ENCODE measurements at regions of chr19 and their contacts with region 1.

Region 1: DNA sequence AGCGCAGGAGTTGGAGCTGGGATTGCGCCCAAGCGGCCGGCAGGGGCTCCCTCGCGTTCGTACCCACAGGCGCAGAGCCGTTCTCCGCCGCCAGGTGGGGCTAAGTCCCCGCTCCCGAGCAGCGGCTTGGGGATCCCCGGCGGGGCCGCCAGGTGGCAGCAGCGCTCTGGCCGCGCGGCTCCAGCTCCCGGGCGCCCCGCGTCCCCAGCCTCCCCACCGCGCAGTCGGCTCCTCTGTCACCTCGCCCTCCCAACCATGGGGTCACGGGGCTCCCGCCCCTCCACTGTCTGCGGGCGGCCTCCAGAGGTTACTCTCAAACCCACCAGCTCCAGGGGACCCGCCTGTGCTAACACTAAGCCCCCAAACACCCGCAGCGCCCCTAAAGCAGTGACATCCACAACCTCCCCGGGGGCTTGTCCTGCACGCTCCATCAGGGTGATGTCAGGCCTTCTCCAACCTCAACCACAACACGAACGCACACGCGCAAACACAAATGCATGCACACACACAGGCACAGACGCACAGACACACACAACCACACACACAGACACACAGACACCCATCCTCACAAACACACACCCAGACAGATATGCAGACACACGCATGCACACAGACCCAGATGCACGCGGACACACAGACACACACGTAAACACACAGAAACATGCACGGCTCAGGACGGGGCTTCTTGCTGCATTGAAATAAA is 18.4 kb upstream of the KCTD15 start:
- DNase-seq: peak; percentile 61
- ATAC-seq: peak; percentile 98
- H3K4me3 ChIP-seq: no peak overlapping the region
- H3K27ac ChIP-seq: no peak overlapping the region
- H3K4me1 ChIP-seq: no peaks in the 10 kb centered on the region
- H3K27me3 ChIP-seq: peaks cover 16% of the 10 kb centered on the region; the same call in 1 of the 2 replicates
- CTCF ChIP-seq: peak; percentile 100; the same call in 1 of the 2 replicates
- POLR2A ChIP-seq: 0 out of 2 replicates have a peak, but pooled peaks have one; percentile 53
- RAD21 ChIP-seq: peak; percentile 100

Region 2: GRCh38 chr19:33125929-33126388 is 652.3 kb before region 1 on chr19:
- CTCF ChIA-PET with region 1: no interaction called
- POLR2A ChIA-PET with region 1: no interaction called
- dilution Hi-C with region 1: no loop called
- in situ Hi-C with region 1: no loop called
- intact Hi-C with region 1: loop called (anchors 10 kb)
- DNase-seq: peak; percentile 69
- ATAC-seq: peak; percentile 99
- H3K4me3 ChIP-seq: no peak overlapping the region
- H3K27ac ChIP-seq: no peak overlapping the region
- H3K4me1 ChIP-seq: no peaks in the 10 kb centered on the region
- H3K27me3 ChIP-seq: no peaks in the 10 kb centered on the region
- CTCF ChIP-seq: peak; percentile 83
- POLR2A ChIP-seq: no peak
- RAD21 ChIP-seq: peak; percentile 76

Region 3: DNA sequence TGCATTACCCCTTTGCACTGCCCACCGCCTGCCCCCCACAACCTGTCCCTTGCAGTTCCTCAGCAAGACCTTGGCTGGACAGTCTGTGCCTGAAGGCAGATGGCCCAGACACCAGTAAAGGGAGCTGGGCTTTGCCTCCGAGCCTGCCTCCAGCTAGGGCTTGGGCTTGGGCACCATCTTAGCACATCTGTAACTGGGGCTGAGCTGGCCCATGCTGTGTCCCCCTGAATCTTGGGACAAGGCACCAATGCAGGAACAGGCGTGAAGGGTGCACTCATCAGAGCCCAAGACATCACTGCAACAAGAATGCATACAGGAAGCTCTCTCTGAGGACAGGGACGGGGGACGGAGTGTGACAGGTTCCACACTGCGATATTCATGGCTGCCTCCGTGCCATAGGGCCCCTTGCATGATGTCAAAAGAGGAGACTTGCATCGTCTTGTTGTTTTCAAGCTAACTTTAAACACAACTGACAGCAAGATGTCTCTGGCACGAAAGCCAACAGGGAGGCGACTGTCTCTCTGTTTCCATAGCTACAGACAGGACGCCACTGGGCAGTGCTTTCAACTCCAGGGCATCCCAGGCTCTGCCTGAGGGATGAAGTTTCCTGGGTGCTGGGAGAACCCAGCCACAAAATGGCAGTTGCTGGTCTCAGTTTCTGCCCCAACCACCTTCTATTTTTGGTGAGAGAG is 165.2 kb before region 1 on chr19:
- CTCF ChIA-PET with region 1: no interaction called
- POLR2A ChIA-PET with region 1: no interaction called
- dilution Hi-C with region 1: no loop called
- in situ Hi-C with region 1: no loop called
- intact Hi-C with region 1: no loop called
- DNase-seq: no peak
- ATAC-seq: no peak
- H3K4me3 ChIP-seq: no peak overlapping the region
- H3K27ac ChIP-seq: no peak overlapping the region
- H3K4me1 ChIP-seq: no peaks in the 10 kb centered on the region
- H3K27me3 ChIP-seq: no peaks in the 10 kb centered on the region
- CTCF ChIP-seq: no peak
- POLR2A ChIP-seq: no peak
- RAD21 ChIP-seq: no peak

Region 4: DNA sequence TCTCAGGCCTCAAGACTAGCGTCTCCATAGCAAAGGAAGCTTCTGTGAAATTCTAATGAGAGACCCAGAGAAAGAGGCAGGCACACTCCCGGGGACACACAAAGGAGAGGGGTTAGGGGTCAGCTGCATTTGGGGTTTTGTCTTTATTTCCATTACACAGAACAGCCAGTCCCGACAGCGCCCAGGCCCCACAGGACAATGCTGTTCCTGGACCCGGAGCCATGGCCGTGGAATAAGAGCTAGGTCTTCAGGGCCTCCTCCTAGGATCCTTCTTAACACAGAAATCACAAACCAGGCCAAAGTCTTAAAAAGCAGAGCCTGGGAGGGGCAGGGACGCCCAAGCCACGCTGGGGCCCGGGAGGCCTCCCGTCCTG is 41.3 kb after region 1 on chr19:
- CTCF ChIA-PET with region 1: interaction called, 10 read pairs
- POLR2A ChIA-PET with region 1: no interaction called
- dilution Hi-C with region 1: no loop called
- in situ Hi-C with region 1: no loop called
- intact Hi-C with region 1: no loop called
- DNase-seq: no peak
- ATAC-seq: no peak
- H3K4me3 ChIP-seq: no peak overlapping the region
- H3K27ac ChIP-seq: no peak overlapping the region
- H3K4me1 ChIP-seq: peaks cover 3% of the 10 kb centered on the region; the same call in 1 of the 2 replicates
- H3K27me3 ChIP-seq: no peaks in the 10 kb centered on the region
- CTCF ChIP-seq: no peak
- POLR2A ChIP-seq: no peak
- RAD21 ChIP-seq: no peak

Region 5: GRCh38 chr19:34096020-34096915 is 318.0 kb after region 1 on chr19:
- CTCF ChIA-PET with region 1: interaction called, 32 read pairs
- POLR2A ChIA-PET with region 1: no interaction called
- dilution Hi-C with region 1: no loop called
- in situ Hi-C with region 1: loop called (anchors 5 kb)
- intact Hi-C with region 1: loop called (anchors 1 kb)
- DNase-seq: peak; percentile 50
- ATAC-seq: peak; percentile 64
- H3K4me3 ChIP-seq: no peak overlapping the region
- H3K27ac ChIP-seq: no peak overlapping the region
- H3K4me1 ChIP-seq: no peaks in the 10 kb centered on the region
- H3K27me3 ChIP-seq: peaks cover 14% of the 10 kb centered on the region
- CTCF ChIP-seq: peak; percentile 71
- POLR2A ChIP-seq: no peak
- RAD21 ChIP-seq: peak; percentile 66

Region 6: GRCh38 chr19:34345947-34346351 is 567.7 kb after region 1 on chr19:
- CTCF ChIA-PET with region 1: no interaction called
- POLR2A ChIA-PET with region 1: no interaction called
- dilution Hi-C with region 1: no loop called
- in situ Hi-C with region 1: loop called (anchors 25 kb)
- intact Hi-C with region 1: no loop called
- DNase-seq: peak; percentile 63
- ATAC-seq: peak; percentile 97
- H3K4me3 ChIP-seq: no peak overlapping the region
- H3K27ac ChIP-seq: no peak overlapping the region
- H3K4me1 ChIP-seq: no peaks in the 10 kb centered on the region
- H3K27me3 ChIP-seq: no peaks in the 10 kb centered on the region
- CTCF ChIP-seq: peak; percentile 83
- POLR2A ChIP-seq: no peak
- RAD21 ChIP-seq: peak; percentile 79